AG04449 (cell line): ENCODE measurements at regions of chr2 and their contacts with region 1.

Region 1: GRCh38 chr2:164717000-164717803 is 95.9 kb upstream of the GRB14 start:
- DNase-seq: no peak
- H3K4me3 ChIP-seq: no peak overlapping the region
- CTCF ChIP-seq: no peak

Region 2: GRCh38 chr2:164569378-164569777 is 147.8 kb before region 1 on chr2:
- CTCF ChIA-PET with region 1: interaction called, 12 read pairs
- POLR2A ChIA-PET with region 1: no interaction called
- DNase-seq: no peak
- H3K4me3 ChIP-seq: no peak overlapping the region
- CTCF ChIP-seq: no peak

Region 3: GRCh38 chr2:164706522-164706921 is 10.7 kb before region 1 on chr2:
- CTCF ChIA-PET with region 1: interaction called, 16 read pairs
- POLR2A ChIA-PET with region 1: no interaction called
- DNase-seq: peak; percentile 50
- H3K4me3 ChIP-seq: no peak overlapping the region
- CTCF ChIP-seq: no peak

Region 4: DNA sequence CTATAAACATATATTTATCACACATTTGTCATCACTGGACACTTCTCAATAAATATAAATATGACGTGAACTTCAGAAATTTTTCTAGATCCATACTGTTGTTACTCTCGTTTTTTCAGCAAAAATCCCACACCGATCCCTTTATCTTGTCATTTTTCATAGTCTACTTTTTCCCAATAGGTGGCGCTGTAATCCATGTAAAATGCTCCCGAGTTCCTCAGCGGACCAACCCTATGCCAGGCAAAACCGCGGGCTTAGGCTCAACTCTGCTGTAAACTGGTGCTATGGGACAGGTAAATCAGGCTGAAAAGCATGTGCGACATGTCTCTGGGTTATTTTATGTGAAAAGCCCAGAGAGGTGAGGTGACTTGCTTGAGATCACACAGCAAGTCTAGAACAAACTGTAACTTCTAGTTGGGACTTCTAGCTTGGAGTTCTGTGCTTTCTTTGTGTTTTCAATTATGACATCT is 20.4 kb after region 1 on chr2:
- CTCF ChIA-PET with region 1: interaction called, 16 read pairs
- POLR2A ChIA-PET with region 1: no interaction called
- DNase-seq: no peak
- H3K4me3 ChIP-seq: no peak overlapping the region
- CTCF ChIP-seq: peak; percentile 43

Region 5: DNA sequence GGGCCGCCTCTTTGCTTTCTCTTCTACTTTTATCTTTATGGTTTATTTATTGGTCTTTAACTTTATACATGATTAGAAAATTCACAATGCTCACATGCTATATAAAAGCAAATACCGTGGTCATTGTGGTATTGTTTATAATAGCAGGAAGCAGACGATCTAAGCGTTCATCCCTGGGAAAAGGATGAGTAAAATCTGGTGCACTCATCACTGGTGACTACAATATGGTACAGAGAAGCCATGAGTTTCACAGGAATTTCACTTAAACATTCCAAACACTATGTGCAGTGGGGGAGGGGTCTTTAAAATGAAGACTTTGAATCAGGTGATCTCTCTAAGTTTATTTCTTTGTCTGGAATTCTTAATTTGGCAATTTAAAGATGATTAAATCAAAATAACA is 388.7 kb after region 1 on chr2:
- CTCF ChIA-PET with region 1: no interaction called
- POLR2A ChIA-PET with region 1: no interaction called
- DNase-seq: no peak
- H3K4me3 ChIP-seq: no peak overlapping the region
- CTCF ChIP-seq: no peak